Heart right ventricle (tissue), 16 donors: ENCODE measurements at regions of chr11 and their contacts with region 1.

Region 1: GRCh38 chr11:102109896-102110760 is at the start of gene YAP1:
- DNase-seq: peak; percentile 91
- ATAC-seq: peak; percentile 85 to 93 (median 90)
- H3K4me3 ChIP-seq: peak within 1 kb of the TSS; percentile 74 to 98 (median 89)
- H3K27ac ChIP-seq: peak within 1 kb of the TSS; percentile 94 to 99 (median 98)
- H3K4me1 ChIP-seq: peaks cover 0 to 39% (median 28%) of the 10 kb centered on the region in 9 donors
- H3K27me3 ChIP-seq: peaks cover 0 to 74% (median 0%) of the 10 kb centered on the region in 7 donors
- CTCF ChIP-seq: peak in 2 of 9 donors; percentile 3 to 12
- total RNA-seq, gene YAP1: 56.5 to 91.3 (median 68.7) TPM

Region 2: DNA sequence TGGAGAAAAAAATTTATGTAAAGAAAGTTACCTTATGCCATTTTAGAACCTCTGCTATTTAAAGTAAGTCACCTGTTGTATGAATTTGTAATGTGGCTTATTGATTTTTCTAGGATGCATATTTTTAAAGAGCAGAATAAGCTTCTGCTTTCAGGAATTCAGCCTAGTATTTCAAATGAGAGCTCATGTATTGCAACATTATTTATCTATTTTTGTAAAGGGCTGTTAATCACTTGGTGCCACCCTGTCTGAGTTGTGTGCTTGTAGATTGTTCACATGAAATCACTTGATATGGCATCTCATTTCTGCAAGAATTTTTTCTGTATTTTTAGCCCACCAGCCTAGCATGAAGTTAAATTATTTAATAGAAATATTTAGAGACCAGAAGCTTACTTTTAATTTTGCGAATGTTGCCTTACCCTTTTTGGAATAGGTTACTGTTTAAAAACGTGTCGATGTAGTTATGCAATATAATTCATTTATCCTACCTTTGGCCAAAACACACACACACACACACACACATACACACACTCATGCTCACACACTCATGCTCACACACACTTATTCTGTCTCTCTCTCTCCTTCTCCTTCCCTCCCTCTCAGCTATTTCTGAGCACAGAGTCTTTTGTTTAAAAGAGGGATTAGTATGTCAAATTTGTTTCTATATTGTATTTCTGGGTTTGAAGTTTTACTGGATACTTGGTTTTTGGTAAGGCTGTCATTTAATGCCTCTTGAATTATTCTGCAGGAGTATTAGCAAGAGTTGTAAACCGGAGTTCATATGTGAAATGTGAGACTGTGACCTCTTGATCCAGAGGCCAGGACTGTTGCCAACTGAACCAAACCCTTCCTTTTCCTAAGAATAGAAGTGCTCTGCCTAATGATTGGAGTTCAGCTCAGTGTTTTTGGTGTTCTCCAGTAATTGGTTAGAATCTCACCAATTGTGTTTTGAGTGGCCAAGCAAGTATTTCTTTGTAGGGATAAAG is 34.5 kb after region 1 on chr11:
- intact Hi-C with region 1: loop called in 1 of 10 experiments (anchors 5 kb)
- DNase-seq: peak in 1 of 2 donors; percentile 78
- ATAC-seq: peak; percentile 72 to 84 (median 82)
- H3K4me3 ChIP-seq: no peak overlapping the region
- H3K27ac ChIP-seq: peak overlapping the region in 9 of 10 donors; percentile 31 to 67 (median 56)
- H3K4me1 ChIP-seq: peaks cover 5 to 91% (median 48%) of the 10 kb centered on the region in 9 donors
- H3K27me3 ChIP-seq: no peaks in the 10 kb centered on the region
- CTCF ChIP-seq: no peak

Region 3: DNA sequence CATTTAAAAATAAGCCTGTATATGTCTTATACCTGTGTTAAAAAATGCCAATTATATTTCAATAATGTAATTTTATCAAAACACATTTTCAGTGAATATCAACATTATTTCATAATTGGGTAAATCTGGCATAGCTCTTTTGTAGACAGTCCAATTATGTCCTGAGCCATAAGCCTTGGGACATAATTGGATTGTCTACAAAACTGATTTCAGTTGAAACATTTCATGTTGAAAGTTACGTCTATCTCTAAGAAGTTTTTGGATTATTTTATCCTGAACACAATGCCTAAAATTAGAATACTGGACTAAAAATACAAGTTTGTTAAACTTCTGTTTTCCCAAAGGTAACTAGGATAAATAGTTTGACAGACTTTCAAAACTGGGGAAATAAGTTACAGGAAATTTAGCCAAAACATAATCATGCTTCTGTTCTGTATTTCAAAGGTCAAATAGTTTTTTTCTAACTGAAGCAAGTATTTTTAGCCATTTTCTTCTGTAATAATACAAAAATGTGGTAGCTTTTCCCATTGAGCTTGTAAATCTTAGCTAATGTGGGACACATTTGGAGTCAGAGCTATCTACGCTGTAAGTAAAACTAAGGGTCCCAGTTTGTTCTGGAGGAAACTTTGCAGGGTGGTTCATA is 106.4 kb after region 1 on chr11:
- intact Hi-C with region 1: loop called in 6 of 10 experiments (anchors 5 to 10 kb)
- DNase-seq: no peak
- ATAC-seq: peak in 7 of 8 donors; percentile 43 to 69 (median 53)
- H3K4me3 ChIP-seq: no peak overlapping the region
- H3K27ac ChIP-seq: peak overlapping the region in 7 of 10 donors; percentile 4 to 53 (median 33)
- H3K4me1 ChIP-seq: peaks cover 0 to 39% (median 21%) of the 10 kb centered on the region in 9 donors
- H3K27me3 ChIP-seq: no peaks in the 10 kb centered on the region
- CTCF ChIP-seq: no peak

Region 4: DNA sequence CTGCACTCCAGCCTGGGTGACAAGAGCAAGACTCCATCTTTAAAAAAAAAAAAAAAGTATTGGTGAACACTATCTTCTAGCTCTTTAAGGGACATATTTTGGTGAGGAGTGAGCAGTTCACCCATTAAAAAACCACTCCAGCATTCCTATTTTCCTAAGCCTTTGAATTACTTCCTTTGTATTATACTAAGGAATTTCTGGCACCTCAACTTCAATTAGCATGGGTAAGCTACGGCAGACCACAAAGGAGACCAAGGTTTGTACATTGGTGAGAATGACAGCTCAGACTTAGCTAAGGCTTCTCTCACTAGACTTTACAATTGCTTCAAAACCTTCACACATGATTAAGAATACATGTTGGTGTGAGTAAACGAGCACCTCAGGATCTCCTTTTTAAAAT is 150.1 kb after region 1 on chr11:
- intact Hi-C with region 1: loop called in 3 of 10 experiments (anchors 5 to 10 kb)
- DNase-seq: no peak
- ATAC-seq: no peak
- H3K4me3 ChIP-seq: no peak overlapping the region
- H3K27ac ChIP-seq: no peak overlapping the region
- H3K4me1 ChIP-seq: no peaks in the 10 kb centered on the region
- H3K27me3 ChIP-seq: no peaks in the 10 kb centered on the region
- CTCF ChIP-seq: no peak

Region 5: GRCh38 chr11:102279641-102280170 is 169.6 kb after region 1 on chr11:
- intact Hi-C with region 1: loop called in 1 of 10 experiments (anchors 10 kb)
- DNase-seq: no peak
- ATAC-seq: peak in 2 of 8 donors; percentile 47 to 55
- H3K4me3 ChIP-seq: peak overlapping the region in 2 of 10 donors; percentile 6 to 13
- H3K27ac ChIP-seq: no peak overlapping the region
- H3K4me1 ChIP-seq: peaks cover 0 to 18% (median 6%) of the 10 kb centered on the region in 9 donors
- H3K27me3 ChIP-seq: peaks cover 0 to 18% (median 0%) of the 10 kb centered on the region in 7 donors
- CTCF ChIP-seq: peak in 2 of 9 donors; percentile 10 to 31